Esophagus squamous epithelium (tissue), 5 donors: ENCODE measurements at regions of chr17 and their contacts with region 1.

Region 1: GRCh38 chr17:75904749-75905521 is at the start of gene MRPL38:
- DNase-seq: peak; percentile 78
- H3K4me3 ChIP-seq: peak within 1 kb of the TSS; percentile 66 to 92 (median 84)
- H3K27ac ChIP-seq: peak within 1 kb of the TSS; percentile 90 to 95 (median 92)
- H3K4me1 ChIP-seq: peaks cover 17 to 61% (median 27%) of the 10 kb centered on the region in 3 donors
- H3K27me3 ChIP-seq: no peaks in the 10 kb centered on the region
- CTCF ChIP-seq: peak; percentile 97 to 100 (median 100)
- POLR2A ChIP-seq: peak in 3 of 4 donors; percentile 34 to 58 (median 41)
- total RNA-seq, gene MRPL38: 40.2 to 49.2 (median 41.0) TPM

Region 2: DNA sequence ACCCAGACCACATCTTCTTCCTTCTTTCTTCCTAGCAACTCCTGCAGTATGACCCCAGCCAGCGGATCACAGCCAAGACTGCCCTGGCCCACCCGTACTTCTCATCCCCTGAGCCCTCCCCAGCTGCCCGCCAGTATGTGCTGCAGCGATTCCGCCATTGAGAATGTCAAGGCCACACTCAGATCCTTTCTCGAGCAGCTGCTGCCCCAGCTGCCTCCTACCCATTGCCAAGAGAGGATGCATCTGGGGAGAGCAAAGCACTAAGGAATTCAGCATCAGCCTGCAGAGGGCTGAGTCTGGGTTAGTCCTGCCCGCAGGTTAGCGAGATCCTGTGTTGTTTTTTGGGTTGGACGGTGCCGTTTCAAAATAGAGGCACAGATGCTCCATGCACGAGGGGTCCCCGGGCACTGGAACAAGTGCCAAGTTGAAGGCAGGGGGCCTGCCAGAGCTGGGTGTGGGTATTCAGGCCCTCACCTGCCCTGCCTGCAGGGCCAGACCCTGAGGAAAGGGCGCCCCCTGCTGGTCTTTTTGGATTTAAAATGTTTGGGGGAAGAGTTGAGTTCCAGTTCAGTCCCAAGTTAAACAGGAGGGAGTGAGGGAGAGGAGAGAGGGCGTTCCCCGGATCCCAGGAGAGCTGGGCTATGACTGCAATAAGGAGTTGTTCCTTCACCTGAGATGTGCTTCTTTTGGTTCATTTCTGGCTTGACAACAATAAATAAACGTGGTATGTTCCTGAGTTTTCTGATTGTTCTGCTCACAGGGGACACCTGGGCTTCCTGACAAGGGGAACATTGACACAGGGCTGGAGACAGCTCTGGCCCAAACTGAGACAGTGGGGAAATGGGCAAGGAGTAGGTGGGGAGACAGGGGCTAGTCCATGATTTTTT is 100.6 kb after region 1 on chr17:
- intact Hi-C with region 1: loop called (anchors 5 kb)
- DNase-seq: no peak
- H3K4me3 ChIP-seq: no peak overlapping the region
- H3K27ac ChIP-seq: peak overlapping the region in 2 of 4 donors; percentile 34 to 50
- H3K4me1 ChIP-seq: peaks cover 0 to 19% (median 3%) of the 10 kb centered on the region in 3 donors
- H3K27me3 ChIP-seq: no peaks in the 10 kb centered on the region
- CTCF ChIP-seq: peak; percentile 68 to 82 (median 76)
- POLR2A ChIP-seq: no peak